Endothelial cell of umbilical vein (primary cell): ENCODE measurements at regions of chr17 and their contacts with region 1.

Region 1: GRCh38 chr17:69523244-69523861 is 108.9 kb downstream of the MAP2K6 start:
- DNase-seq: peak; percentile 76
- H3K4me3 ChIP-seq: no peak overlapping the region
- H3K27ac ChIP-seq: no peak overlapping the region
- H3K4me1 ChIP-seq: peaks cover 14% of the 10 kb centered on the region
- H3K27me3 ChIP-seq: no peaks in the 10 kb centered on the region
- CTCF ChIP-seq: peak; percentile 68 to 74
- POLR2A ChIP-seq: no peak

Region 2: GRCh38 chr17:69246726-69247375 is 276.5 kb before region 1 on chr17:
- CTCF ChIA-PET with region 1: interaction called, 27 read pairs
- POLR2A ChIA-PET with region 1: no interaction called
- dilution Hi-C with region 1: no loop called
- intact Hi-C with region 1: loop called (anchors 1 kb)
- DNase-seq: peak; percentile 69
- H3K4me3 ChIP-seq: no peak overlapping the region
- H3K27ac ChIP-seq: no peak overlapping the region
- H3K4me1 ChIP-seq: no peaks in the 10 kb centered on the region
- H3K27me3 ChIP-seq: no peaks in the 10 kb centered on the region
- CTCF ChIP-seq: peak in 1 of 2 donors; percentile 27
- POLR2A ChIP-seq: no peak

Region 3: GRCh38 chr17:69414408-69415274 is 108.7 kb before region 1 on chr17 and contains the start of gene MAP2K6:
- CTCF ChIA-PET with region 1: interaction called, 26 read pairs
- POLR2A ChIA-PET with region 1: no interaction called
- dilution Hi-C with region 1: no loop called
- intact Hi-C with region 1: loop called (anchors 1 kb)
- DNase-seq: peak; percentile 86
- H3K4me3 ChIP-seq: peak within 1 kb of the TSS; percentile 42 to 70 (median 48)
- H3K27ac ChIP-seq: peak within 1 kb of the TSS; percentile 35
- H3K4me1 ChIP-seq: peaks cover 48% of the 10 kb centered on the region
- H3K27me3 ChIP-seq: no peaks in the 10 kb centered on the region
- CTCF ChIP-seq: no peak
- POLR2A ChIP-seq: peak; percentile 50
- total RNA-seq, gene MAP2K6: 11.4 and 13.9 TPM in 2 replicates

Region 4: DNA sequence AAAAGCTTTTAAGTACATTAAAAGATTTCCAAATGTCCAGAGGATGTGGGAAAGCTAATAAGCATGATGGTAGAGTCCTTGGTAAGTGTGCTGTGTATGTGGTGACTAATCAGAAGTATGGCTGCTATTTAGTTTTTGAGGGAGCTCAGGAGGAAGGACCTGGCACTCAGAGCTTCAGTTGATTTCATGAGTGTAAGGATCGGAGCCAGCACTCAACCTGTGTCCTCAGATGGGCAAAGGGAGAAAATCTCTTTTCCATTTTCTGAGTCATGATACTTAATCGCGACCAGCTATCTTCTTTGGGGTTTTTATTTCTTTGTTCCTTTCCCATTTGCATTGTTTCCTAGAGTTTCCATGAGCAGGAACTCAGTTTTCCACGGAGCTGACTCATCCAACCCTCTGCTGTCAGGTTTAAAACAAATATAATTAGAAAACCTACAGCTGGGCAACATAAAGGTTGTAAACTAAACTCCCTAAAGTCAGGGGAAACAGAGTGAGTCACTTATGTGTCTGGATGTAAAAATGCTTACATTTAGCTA is 16.5 kb after region 1 on chr17:
- CTCF ChIA-PET with region 1: interaction called, 22 read pairs
- POLR2A ChIA-PET with region 1: interaction called, 3 read pairs
- dilution Hi-C with region 1: no loop called
- intact Hi-C with region 1: no loop called
- DNase-seq: peak; percentile 97
- H3K4me3 ChIP-seq: no peak overlapping the region
- H3K27ac ChIP-seq: peak overlapping the region; percentile 89
- H3K4me1 ChIP-seq: peaks cover 18% of the 10 kb centered on the region
- H3K27me3 ChIP-seq: no peaks in the 10 kb centered on the region
- CTCF ChIP-seq: no peak
- POLR2A ChIP-seq: peak; percentile 34

Region 5: DNA sequence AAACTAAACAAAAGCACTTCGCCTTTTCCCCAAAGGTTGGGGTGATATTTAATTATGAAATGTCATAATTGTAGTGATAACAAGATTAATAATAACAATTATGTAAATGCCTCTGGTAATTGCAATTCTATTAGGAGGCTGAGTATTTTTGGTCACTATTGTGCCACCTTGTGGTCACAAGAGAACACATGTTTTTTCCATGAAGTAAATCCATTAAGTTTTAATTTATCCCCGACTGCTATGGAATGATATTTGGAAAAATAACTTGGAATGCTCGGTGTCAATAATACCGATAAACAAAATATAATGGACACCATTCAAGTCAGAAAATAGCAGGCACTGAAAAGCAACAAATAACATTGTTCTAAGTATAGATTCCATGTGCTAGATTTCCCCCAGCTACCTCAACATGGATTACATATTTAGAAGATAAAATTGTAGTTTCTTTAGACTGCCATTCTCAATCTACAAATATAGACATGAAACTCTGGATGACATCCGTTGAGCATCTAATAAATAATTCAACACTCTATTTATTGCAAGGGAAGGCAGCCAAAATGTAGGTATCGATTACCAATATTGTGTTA is 621.0 kb after region 1 on chr17:
- CTCF ChIA-PET with region 1: interaction called, 16 read pairs
- POLR2A ChIA-PET with region 1: no interaction called
- dilution Hi-C with region 1: no loop called
- intact Hi-C with region 1: loop called (anchors 2 kb)
- DNase-seq: peak; percentile 76
- H3K4me3 ChIP-seq: no peak overlapping the region
- H3K27ac ChIP-seq: no peak overlapping the region
- H3K4me1 ChIP-seq: peaks cover 2% of the 10 kb centered on the region
- H3K27me3 ChIP-seq: no peaks in the 10 kb centered on the region
- CTCF ChIP-seq: peak; percentile 5 to 16
- POLR2A ChIP-seq: no peak

Region 6: DNA sequence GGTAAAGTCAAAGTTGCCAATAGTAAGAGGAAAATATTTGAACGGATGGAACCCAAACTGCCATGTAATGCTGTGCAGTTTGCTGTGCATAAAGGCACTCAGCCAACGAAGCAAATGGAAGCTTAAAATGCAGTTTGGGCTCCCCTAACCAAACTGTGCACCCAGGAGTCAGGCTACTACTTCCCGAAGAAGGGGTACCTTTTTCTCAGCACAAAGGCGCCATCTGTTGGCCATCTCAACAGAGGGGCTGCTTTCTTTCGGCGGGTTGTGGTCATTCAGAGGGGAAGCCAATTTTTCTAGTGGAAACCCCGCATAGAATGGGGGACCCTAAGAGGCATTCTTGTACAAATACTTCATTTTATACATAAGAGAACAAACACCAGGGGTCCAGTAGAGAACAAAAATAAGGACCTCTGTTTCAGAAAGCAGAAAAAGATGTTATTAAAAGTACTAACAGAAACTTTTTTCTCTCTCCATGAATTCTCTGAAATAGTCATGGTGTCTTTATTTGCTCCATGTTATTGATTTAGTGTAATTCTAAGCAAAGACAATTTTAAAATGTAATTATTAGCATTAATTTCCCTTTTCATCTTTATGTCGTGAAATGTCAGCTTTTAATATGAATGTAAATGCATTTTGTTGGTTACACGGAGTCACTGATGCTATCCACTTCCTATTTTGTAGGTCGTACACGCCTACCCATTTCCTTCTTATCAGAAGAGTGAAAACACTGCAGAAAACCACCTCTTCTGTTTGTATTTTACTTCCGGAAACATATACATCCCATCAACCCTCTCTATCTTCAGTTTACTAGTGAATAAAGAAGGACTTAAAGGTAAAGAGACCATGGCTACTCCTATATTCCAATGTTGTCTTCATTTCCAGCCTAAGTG is 1099.3 kb after region 1 on chr17:
- CTCF ChIA-PET with region 1: interaction called, 64 read pairs
- POLR2A ChIA-PET with region 1: no interaction called
- dilution Hi-C with region 1: no loop called
- intact Hi-C with region 1: loop called (anchors 1 kb)
- DNase-seq: peak; percentile 76
- H3K4me3 ChIP-seq: no peak overlapping the region
- H3K27ac ChIP-seq: no peak overlapping the region
- H3K4me1 ChIP-seq: peaks cover 5% of the 10 kb centered on the region
- H3K27me3 ChIP-seq: no peaks in the 10 kb centered on the region
- CTCF ChIP-seq: peak; percentile 64 to 79
- POLR2A ChIP-seq: no peak